Naive thymus-derived CD8-positive, alpha-beta T cell (primary cell): ENCODE measurements at regions of chr11 and their contacts with region 1.

Region 1: DNA sequence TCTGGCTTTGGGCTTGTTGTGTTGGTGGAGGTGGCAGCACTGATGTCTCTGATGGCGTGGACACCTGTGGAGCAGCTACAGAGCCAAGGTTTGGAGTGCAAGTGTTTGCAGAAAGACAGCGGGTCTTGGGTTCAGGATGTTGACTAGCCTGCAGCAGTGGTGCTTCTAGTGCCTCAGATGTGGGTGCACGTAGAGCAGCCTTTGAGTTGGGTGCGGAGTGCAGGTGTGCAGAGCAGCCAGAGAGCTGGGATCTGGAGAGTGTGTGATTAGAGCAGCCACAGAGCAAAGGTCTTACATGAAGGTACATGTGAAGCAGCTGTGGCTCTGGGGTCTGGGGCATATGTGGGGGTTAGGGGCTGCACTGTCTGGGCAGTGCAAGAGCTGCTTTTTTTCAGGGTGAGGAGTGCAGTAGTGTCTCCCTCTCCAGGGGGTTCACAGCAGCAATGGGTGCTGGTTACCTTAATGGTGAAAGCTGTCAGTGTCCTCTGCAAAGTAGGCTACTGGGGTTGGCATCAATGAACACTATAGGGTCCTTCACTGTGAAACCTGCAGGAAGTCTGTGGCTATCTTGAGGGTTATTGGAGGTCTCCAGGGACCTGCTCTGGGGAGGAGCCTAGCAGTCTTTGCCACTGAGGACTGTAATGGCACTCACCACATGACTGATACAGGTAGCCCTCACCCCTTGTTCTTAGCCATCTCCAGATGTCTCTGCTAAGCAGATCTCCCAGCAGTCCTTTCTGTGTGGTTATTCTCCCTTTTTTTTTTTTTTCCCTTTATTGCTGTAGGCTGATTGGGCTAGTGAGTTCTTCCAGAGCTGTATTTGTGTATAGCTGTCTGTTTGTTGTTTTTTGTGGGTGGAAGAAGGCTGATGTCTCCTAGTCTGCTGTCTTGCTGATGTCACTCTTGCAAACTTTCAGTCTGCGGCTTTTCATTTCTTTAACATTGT is 14.3 kb downstream of the BIRC2 start:
- DNase-seq: peak; percentile 17 to 81 (median 68)
- ATAC-seq: peak; percentile 80 to 82
- H3K4me3 Mint-ChIP-seq: peak overlapping the region; percentile 72 to 87 (median 77)
- H3K27ac Mint-ChIP-seq: peak overlapping the region; percentile 94 to 99 (median 96)
- H3K4me1 Mint-ChIP-seq: peaks cover 32 to 71% (median 63%) of the 10 kb centered on the region in 4 donors
- H3K27me3 Mint-ChIP-seq: no peaks in the 10 kb centered on the region

Region 2: GRCh38 chr11:102309621-102310541 is 51.5 kb before region 1 on chr11:
- POLR2A ChIA-PET with region 1: no interaction called
- DNase-seq: no peak
- ATAC-seq: no peak
- H3K4me3 Mint-ChIP-seq: no peak overlapping the region
- H3K27ac Mint-ChIP-seq: peak overlapping the region in 4 of 10 donors; percentile 6 to 51 (median 30)
- H3K4me1 Mint-ChIP-seq: peaks cover 20 to 75% (median 48%) of the 10 kb centered on the region in 4 donors
- H3K27me3 Mint-ChIP-seq: no peaks in the 10 kb centered on the region

Region 3: DNA sequence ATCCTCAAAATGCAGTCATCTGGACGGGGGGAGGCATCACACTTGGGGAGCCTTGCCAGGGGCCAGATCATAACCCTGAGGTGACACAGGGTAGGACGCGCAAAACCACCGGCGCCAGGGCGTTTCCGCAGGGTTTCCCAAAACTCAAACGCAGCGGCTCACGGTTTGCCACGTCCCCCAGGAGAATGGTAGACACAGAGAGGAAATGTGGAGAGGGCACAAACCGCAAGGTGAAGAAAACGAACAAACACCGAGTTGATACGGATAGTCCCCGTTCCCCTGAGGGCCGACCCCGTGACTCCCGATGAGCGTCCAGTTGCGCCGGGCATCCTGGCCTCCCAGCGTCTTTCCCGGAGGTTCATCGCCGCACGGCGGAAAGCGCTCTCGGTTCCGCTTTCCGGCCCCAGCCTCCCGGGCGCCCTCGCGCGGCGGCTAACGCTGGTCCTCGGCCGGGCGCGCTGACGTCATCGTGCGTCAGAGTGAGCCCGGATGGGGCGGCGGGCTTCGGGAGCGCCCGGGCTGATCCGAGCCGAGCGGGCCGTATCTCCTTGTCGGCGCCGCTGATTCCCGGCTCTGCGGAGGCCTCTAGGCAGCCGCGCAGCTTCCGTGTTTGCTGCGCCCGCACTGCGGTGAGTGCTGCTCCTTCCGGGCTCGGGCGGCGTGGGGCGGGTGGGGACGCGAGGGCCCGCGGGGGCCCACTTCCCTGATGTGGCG is 14.5 kb before region 1 on chr11 and contains the start of gene BIRC2:
- POLR2A ChIA-PET with region 1: interaction called, 42 read pairs
- DNase-seq: peak; percentile 92 to 97 (median 95)
- ATAC-seq: peak; percentile 83 to 85
- H3K4me3 Mint-ChIP-seq: peak within 1 kb of the TSS; percentile 93 to 99 (median 98)
- H3K27ac Mint-ChIP-seq: peak within 1 kb of the TSS; percentile 98 to 100 (median 100)
- H3K4me1 Mint-ChIP-seq: peaks cover 19 to 48% (median 42%) of the 10 kb centered on the region in 4 donors
- H3K27me3 Mint-ChIP-seq: no peaks in the 10 kb centered on the region
- polyA plus RNA-seq, gene BIRC2: 29.6 to 41.9 (median 32.2) TPM

Region 4: DNA sequence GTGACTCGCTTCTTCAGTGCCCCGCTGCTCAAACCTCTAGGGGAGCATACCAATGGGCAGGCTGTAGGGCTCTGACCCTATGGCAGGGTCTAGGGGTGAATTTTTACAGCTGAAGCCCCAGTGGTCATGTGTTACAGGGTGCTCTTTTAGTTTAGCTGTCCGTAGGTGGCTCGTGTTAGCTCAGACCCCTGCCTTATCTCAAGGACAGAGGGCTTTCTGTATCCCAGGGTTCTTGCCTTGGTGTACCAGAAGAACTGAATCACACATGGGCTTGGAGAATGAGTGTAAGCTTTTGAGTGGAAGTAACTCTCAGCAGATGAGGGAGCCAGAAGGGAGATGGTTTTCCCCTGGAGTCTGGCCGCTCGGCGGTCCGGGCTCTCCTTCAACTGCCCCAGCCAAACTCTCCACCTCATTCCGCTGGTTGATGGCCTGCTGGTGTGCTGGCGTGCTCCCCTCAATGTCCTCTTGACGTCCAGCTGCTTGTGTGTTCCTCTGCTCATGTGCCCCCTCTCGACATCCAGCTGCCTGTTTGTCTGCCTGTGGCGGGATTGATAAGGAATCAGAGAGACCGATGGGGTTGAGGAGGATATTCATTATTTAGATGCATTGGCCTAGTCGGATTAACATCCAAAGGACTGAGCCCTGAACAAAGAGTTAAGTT is 23.2 kb after region 1 on chr11:
- POLR2A ChIA-PET with region 1: no interaction called
- DNase-seq: no peak
- ATAC-seq: no peak
- H3K4me3 Mint-ChIP-seq: no peak overlapping the region
- H3K27ac Mint-ChIP-seq: peak overlapping the region in 8 of 10 donors; percentile 22 to 78 (median 44)
- H3K4me1 Mint-ChIP-seq: peaks cover 5 to 35% (median 30%) of the 10 kb centered on the region in 4 donors
- H3K27me3 Mint-ChIP-seq: no peaks in the 10 kb centered on the region

Region 5: DNA sequence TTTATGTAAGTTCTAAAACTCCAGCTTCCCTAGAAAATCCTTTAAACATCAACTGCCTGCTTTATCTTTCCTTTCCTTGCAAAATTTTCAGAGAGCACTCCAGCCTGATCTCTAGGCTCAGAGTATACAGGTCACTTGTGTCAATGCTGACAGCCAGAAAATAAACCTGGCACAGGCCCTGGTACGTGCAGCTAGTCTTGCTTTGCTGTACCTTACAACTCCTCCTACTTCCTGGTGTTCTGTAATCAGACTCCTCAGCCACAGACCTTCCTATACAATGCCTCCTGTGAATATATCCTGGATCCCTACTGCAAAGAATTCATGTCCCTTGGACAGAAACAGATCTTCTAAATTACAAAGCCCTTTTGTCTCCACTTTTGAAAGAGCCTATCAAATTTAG is 115.5 kb after region 1 on chr11:
- POLR2A ChIA-PET with region 1: no interaction called
- DNase-seq: peak in 4 of 10 donors; percentile 12 to 27 (median 22)
- ATAC-seq: peak; percentile 86 to 88
- H3K4me3 Mint-ChIP-seq: peak overlapping the region in 9 of 10 donors; percentile 50 to 73 (median 64)
- H3K27ac Mint-ChIP-seq: peak overlapping the region; percentile 74 to 96 (median 93)
- H3K4me1 Mint-ChIP-seq: peaks cover 36 to 69% (median 59%) of the 10 kb centered on the region in 4 donors
- H3K27me3 Mint-ChIP-seq: no peaks in the 10 kb centered on the region